ENCODE measurements at regions of chr3 and their contacts with region 1.

Region 1: GRCh38 chr3:33074217-33075067 is 22.5 kb downstream of the GLB1 start:
- DNase-seq: no peak
- ATAC-seq: peak; percentile 97
- H3K4me3 ChIP-seq: no peak overlapping the region
- H3K27ac ChIP-seq: no peak overlapping the region
- H3K4me1 ChIP-seq: no peaks in the 10 kb centered on the region
- H3K27me3 ChIP-seq: no peaks in the 10 kb centered on the region
- CTCF ChIP-seq: peak; percentile 88 to 94 (median 93)
- EP300 ChIP-seq: no peak
- POLR2A ChIP-seq: no peak
- RAD21 ChIP-seq: peak; percentile 92

Region 2: DNA sequence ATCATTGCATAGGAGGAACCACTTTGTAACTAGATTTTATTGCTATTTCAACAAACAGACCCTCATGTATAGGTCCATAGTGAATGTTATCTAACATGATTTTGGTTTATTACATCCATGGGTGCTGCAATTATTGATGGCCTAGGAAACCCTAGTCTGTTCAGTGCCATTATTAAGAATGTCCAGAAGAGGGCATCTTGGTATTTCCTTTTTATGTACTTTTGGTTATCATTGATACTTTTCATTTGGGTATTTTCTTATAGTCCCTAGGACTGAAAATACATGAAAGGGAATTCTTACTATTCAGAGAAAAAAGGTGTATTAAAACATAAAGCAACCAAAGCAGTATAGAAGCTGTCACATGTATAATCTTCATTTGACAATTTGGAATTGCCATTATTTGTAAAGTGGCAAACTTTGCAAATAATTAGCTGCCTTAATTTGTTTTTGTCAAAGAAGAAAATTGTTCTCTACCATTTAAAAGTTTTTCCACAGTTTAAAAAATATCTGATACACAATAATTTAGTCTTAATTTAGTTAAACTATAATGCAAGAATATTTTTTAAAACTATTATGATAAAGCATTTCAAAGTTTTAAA is 340.7 kb before region 1 on chr3:
- CTCF ChIA-PET with region 1: interaction called, 3 read pairs
- POLR2A ChIA-PET with region 1: no interaction called
- RAD21 ChIA-PET with region 1: no interaction called
- SMC1A ChIA-PET with region 1: no interaction called
- in situ Hi-C with region 1: no loop called
- intact Hi-C with region 1: loop called (anchors 10 kb)
- DNase-seq: peak; percentile 4
- ATAC-seq: peak; percentile 73
- H3K4me3 ChIP-seq: no peak overlapping the region
- H3K27ac ChIP-seq: no peak overlapping the region
- H3K4me1 ChIP-seq: no peaks in the 10 kb centered on the region
- H3K27me3 ChIP-seq: no peaks in the 10 kb centered on the region
- CTCF ChIP-seq: peak; percentile 48 to 57 (median 57); a peak in 5 of 6 replicates
- EP300 ChIP-seq: no peak
- POLR2A ChIP-seq: no peak
- RAD21 ChIP-seq: peak; percentile 64

Region 3: GRCh38 chr3:33063651-33064051 is 10.8 kb before region 1 on chr3:
- CTCF ChIA-PET with region 1: interaction called, 27 read pairs
- POLR2A ChIA-PET with region 1: no interaction called
- RAD21 ChIA-PET with region 1: interaction called, 3 read pairs
- SMC1A ChIA-PET with region 1: interaction called, 4 read pairs
- in situ Hi-C with region 1: no loop called
- intact Hi-C with region 1: no loop called
- DNase-seq: peak; percentile 42
- ATAC-seq: peak; percentile 76
- H3K4me3 ChIP-seq: no peak overlapping the region
- H3K27ac ChIP-seq: no peak overlapping the region
- H3K4me1 ChIP-seq: peaks cover 22% of the 10 kb centered on the region
- H3K27me3 ChIP-seq: no peaks in the 10 kb centered on the region
- CTCF ChIP-seq: no peak
- EP300 ChIP-seq: no peak
- POLR2A ChIP-seq: no peak
- RAD21 ChIP-seq: no peak

Region 4: DNA sequence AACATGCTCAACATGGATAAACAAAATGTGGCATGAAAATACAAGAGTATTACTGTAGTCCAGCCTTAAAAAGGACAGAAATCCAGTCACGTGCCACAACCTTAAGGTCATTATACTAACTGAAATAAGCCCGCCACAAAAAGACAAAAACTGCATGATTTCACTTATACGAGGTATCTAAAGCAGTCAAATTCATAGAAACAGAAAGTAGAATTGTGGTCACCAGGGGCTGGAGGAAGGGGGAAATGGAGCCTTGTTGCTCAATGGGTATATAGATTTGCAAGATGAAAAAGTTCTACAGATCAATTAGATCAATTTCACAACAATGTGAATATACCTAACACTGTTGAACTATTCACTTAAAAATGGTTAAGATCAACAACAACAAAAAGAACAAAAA is 15.1 kb after region 1 on chr3:
- CTCF ChIA-PET with region 1: interaction called, 17 read pairs
- POLR2A ChIA-PET with region 1: interaction called, 3 read pairs
- RAD21 ChIA-PET with region 1: interaction called, 3 read pairs
- SMC1A ChIA-PET with region 1: interaction called, 21 read pairs
- in situ Hi-C with region 1: no loop called
- intact Hi-C with region 1: no loop called
- DNase-seq: peak; percentile 43
- ATAC-seq: peak; percentile 88
- H3K4me3 ChIP-seq: no peak overlapping the region
- H3K27ac ChIP-seq: no peak overlapping the region
- H3K4me1 ChIP-seq: peaks cover 17% of the 10 kb centered on the region
- H3K27me3 ChIP-seq: no peaks in the 10 kb centered on the region
- CTCF ChIP-seq: no peak
- EP300 ChIP-seq: 0 out of 4 replicates have a peak, but pooled peaks of 1 of the 2 experiments have one; percentile 15
- POLR2A ChIP-seq: no peak
- RAD21 ChIP-seq: no peak

Region 5: DNA sequence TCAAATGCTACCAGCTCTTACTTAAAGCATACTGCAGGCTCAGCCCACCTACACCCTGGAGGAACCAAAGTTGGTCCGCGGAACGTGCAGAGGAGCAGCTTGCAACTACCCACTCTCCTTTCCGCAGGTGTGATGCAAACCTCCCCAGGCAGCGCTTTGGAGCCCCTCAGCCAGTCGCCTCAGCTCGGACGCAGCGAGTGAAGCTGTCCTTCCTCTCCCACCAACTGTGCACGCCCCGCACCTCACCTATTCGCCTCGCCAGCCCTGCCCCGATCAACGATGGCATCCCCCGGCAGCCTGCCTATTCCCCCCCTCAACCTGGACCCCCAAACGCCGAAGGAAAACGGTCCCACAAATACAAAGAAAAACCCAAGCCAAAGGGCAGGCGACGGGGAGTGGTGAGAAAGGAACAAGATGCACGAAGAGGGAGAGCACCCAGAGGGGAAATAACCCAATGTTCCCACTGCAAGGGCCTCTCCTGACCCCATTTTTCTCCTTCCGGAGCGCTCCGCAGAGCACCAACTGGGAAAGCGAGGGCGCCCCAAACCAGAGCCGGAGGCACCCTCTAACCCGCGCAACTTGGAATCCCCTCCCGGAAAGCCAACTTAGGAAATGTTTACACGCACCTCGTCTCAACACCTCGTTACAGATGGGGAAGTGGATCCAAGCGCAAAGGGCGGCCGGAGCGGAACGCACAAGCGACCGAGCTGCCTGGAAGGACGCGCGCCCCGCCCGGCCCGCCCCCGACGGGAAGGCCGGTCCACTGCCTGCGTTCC is 21.8 kb after region 1 on chr3:
- CTCF ChIA-PET with region 1: interaction called, 10 read pairs
- POLR2A ChIA-PET with region 1: no interaction called
- RAD21 ChIA-PET with region 1: no interaction called
- SMC1A ChIA-PET with region 1: interaction called, 5 read pairs
- in situ Hi-C with region 1: no loop called
- intact Hi-C with region 1: no loop called
- DNase-seq: no peak
- ATAC-seq: peak; percentile 77
- H3K4me3 ChIP-seq: peak overlapping the region; percentile 96
- H3K27ac ChIP-seq: peak overlapping the region; percentile 90
- H3K4me1 ChIP-seq: no peaks in the 10 kb centered on the region
- H3K27me3 ChIP-seq: no peaks in the 10 kb centered on the region
- CTCF ChIP-seq: no peak
- EP300 ChIP-seq: no peak
- POLR2A ChIP-seq: no peak; the same call in 1 of the 2 replicates
- RAD21 ChIP-seq: no peak